ENCODE measurements at regions of chr17 and their contacts with region 1.

Region 1: GRCh38 chr17:43393944-43394482 is 4.8 kb upstream of the ARL4D start:
- DNase-seq: peak; percentile 93
- H3K4me3 Mint-ChIP-seq: peak overlapping the region; percentile 8
- H3K27ac Mint-ChIP-seq: peak overlapping the region; percentile 42
- H3K4me1 Mint-ChIP-seq: peaks cover 27% of the 10 kb centered on the region
- H3K27me3 Mint-ChIP-seq: no peaks in the 10 kb centered on the region

Region 2: GRCh38 chr17:43360739-43361505 is 33.1 kb before region 1 on chr17:
- CTCF ChIA-PET with region 1: interaction called, 5 read pairs
- POLR2A ChIA-PET with region 1: interaction called, 12 read pairs
- intact Hi-C with region 1: no loop called
- DNase-seq: peak; percentile 93
- H3K4me3 Mint-ChIP-seq: peak overlapping the region; percentile 86
- H3K27ac Mint-ChIP-seq: peak overlapping the region; percentile 99
- H3K4me1 Mint-ChIP-seq: peaks cover 29% of the 10 kb centered on the region
- H3K27me3 Mint-ChIP-seq: peaks cover 11% of the 10 kb centered on the region

Region 3: GRCh38 chr17:43381204-43381603 is 12.8 kb before region 1 on chr17:
- CTCF ChIA-PET with region 1: interaction called, 13 read pairs
- POLR2A ChIA-PET with region 1: no interaction called
- intact Hi-C with region 1: no loop called
- DNase-seq: no peak
- H3K4me3 Mint-ChIP-seq: no peak overlapping the region
- H3K27ac Mint-ChIP-seq: no peak overlapping the region
- H3K4me1 Mint-ChIP-seq: peaks cover under 1% of the 10 kb centered on the region
- H3K27me3 Mint-ChIP-seq: no peaks in the 10 kb centered on the region

Region 4: DNA sequence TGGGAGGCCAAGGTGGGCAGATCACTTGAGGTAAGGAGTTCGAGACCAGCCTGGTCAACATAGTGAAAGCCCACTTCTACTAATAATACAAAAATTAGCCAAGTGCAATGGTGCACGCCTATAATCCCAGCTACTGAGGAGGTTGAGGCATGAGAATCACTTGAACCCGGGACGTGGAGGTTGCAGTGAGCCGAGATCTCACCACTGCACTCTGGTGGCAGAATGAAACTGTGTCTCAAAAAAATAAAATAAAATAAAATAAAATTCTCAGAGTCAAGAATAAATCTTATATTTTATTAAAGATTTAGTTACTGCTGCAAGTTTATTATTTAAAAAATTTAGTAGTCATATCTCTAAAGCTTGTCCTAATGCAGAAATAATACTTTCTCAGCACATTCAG is 34.5 kb after region 1 on chr17:
- CTCF ChIA-PET with region 1: interaction called, 11 read pairs
- POLR2A ChIA-PET with region 1: no interaction called
- intact Hi-C with region 1: no loop called
- DNase-seq: no peak
- H3K4me3 Mint-ChIP-seq: no peak overlapping the region
- H3K27ac Mint-ChIP-seq: no peak overlapping the region
- H3K4me1 Mint-ChIP-seq: no peaks in the 10 kb centered on the region
- H3K27me3 Mint-ChIP-seq: peaks cover 10% of the 10 kb centered on the region

Region 5: GRCh38 chr17:43483674-43484372 is 89.8 kb after region 1 on chr17 and contains the start of gene DHX8:
- CTCF ChIA-PET with region 1: interaction called, 261 read pairs
- POLR2A ChIA-PET with region 1: interaction called, 8 read pairs
- intact Hi-C with region 1: loop called (anchors 1 kb)
- DNase-seq: peak; percentile 99
- H3K4me3 Mint-ChIP-seq: peak within 1 kb of the TSS; percentile 99
- H3K27ac Mint-ChIP-seq: peak within 1 kb of the TSS; percentile 95
- H3K4me1 Mint-ChIP-seq: peaks cover 18% of the 10 kb centered on the region
- H3K27me3 Mint-ChIP-seq: no peaks in the 10 kb centered on the region
- total RNA-seq, gene DHX8: 47.8 to 54.1 TPM

Measured in activated CD4-positive, alpha-beta memory T cell treated with anti-CD3 and anti-CD28 coated beads for 36 hours (primary cell).